Breast epithelium (tissue), 4 donors: ENCODE measurements at regions of chr9 and their contacts with region 1.

Region 1: DNA sequence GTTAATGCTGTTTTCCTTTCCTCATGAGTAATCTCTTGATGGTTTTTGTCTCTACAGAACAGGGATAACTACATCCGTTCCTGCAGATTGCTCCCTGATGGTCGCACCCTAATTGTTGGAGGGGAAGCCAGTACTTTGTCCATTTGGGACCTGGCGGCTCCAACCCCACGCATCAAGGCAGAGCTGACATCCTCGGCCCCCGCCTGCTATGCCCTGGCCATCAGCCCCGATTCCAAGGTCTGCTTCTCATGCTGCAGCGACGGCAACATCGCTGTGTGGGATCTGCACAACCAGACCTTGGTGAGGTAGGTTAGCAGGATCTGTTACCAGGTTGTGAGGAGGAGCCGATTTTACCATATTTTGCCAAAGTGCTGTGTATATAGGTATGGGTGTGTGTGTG is 148.2 kb downstream of the TLE4 start:
- DNase-seq: no peak
- H3K4me3 ChIP-seq: no peak overlapping the region
- H3K27ac ChIP-seq: no peak overlapping the region
- H3K4me1 ChIP-seq: no peaks in the 10 kb centered on the region
- H3K27me3 ChIP-seq: no peaks in the 10 kb centered on the region
- CTCF ChIP-seq: no peak
- POLR2A ChIP-seq: no peak

Region 2: DNA sequence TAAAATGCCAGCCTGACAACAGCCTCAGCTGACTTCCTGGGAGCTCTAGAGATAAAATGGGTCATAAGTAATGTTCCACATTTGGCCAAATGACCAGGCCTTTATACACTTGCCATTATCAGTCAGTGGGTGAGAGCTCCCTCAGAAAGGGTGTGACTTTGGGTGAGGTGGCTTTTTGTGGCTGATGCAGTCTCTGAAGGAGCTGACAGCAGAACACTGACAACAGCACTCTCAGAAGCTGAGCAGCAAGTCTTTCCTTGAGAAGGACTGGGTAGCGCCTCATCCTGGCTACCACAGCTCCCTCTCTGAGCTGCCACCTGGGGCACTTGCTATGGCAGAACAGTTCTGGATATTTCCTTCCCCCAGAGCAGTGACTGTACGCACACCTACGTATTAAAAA is 1666.4 kb before region 1 on chr9:
- intact Hi-C with region 1: loop called (anchors 10 kb)
- DNase-seq: no peak
- H3K4me3 ChIP-seq: no peak overlapping the region
- H3K27ac ChIP-seq: no peak overlapping the region
- H3K4me1 ChIP-seq: no peaks in the 10 kb centered on the region
- H3K27me3 ChIP-seq: no peaks in the 10 kb centered on the region
- CTCF ChIP-seq: no peak
- POLR2A ChIP-seq: no peak